Right ventricle myocardium inferior (tissue), 1 donor: ENCODE measurements at regions of chr1 and their contacts with region 1.

Region 1: GRCh38 chr1:93722081-93723031 is 40.7 kb upstream of the BCAR3 start:
- DNase-seq: no peak
- ATAC-seq: peak; percentile 87

Region 2: DNA sequence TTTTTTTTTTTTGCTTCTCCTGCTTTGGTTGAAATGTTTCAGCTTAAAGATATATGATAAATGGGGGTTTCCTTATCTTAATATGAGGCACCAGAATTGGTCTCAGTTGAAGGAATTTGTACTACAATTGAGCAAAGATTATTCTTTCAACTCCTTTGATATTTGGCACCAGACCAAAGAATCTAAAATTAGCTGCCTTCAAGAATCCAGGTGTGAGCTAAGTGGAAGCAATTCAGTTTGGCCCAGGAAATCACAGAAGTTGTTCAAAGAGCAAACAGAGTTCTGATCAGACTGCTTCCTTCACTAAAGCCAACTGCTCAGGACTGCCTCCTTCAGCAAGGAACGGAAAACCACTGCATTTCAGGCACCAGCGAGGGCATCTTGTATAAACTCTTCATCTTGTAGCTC is 27.5 kb after region 1 on chr1:
- intact Hi-C with region 1: loop called (anchors 2 kb)
- DNase-seq: no peak
- ATAC-seq: no peak